ENCODE measurements at regions of chr9 and their contacts with region 1.

Region 1: DNA sequence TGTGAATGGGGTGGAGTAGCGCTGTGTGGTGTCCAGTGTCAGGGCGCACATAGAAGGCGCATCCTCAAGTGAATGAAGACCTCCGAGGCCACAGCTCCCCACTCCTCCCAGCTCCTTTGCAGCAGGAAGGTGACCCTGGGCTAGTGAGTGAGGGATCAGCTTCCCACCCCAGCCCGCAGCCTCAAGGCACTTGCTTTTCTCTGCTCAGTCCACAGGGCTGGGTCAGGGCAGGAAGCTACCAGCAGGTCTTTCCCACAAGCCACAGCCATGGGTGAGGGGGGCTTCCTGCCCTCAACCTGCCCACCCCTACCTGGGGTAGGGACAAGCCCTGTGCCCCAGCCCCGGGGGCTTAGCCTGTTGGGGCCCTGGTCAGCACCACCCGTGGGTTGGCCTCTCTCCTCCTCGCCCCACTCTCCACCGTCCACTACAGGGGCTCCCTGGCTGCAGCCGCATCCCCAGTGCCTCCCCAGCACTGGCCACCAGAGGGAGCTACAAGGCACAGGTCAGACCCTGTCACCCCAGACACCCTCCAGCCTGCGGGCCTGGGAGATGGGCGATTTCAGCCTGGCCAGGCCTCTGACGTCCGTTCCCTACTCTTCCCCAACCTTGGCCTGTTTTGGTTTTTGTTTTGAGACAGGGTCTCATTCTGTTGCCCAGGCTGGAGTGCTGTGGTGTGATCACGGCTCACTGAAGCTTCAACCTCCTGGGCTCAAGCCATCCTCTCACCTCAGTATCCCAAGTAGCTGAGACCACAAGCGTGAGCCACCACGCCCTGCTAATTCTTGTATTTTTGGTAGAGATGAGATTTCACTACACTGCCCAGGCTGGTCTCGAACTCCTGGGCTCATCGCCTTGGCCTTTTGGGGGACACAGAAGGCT is 1.3 kb upstream of the ABCA2 start:
- DNase-seq: peak; percentile 85 to 90
- H3K4me3 ChIP-seq: peak overlapping the region; percentile 75
- H3K4me3 Mint-ChIP-seq: peak overlapping the region; percentile 74
- H3K27ac Mint-ChIP-seq: peak overlapping the region; percentile 42
- H3K4me1 ChIP-seq: peaks cover 14% of the 10 kb centered on the region
- H3K4me1 Mint-ChIP-seq: no peaks in the 10 kb centered on the region
- H3K27me3 ChIP-seq: no peaks in the 10 kb centered on the region
- H3K27me3 Mint-ChIP-seq: no peaks in the 10 kb centered on the region
- CTCF ChIP-seq: peak; percentile 86 to 97

Region 2: GRCh38 chr9:136799854-136800657 is 229.2 kb before region 1 on chr9:
- CTCF ChIA-PET with region 1: interaction called, 13 read pairs
- POLR2A ChIA-PET with region 1: no interaction called
- intact Hi-C with region 1: no loop called
- DNase-seq: peak; percentile 90 to 96
- H3K4me3 ChIP-seq: peak overlapping the region; percentile 78
- H3K4me3 Mint-ChIP-seq: peak overlapping the region; percentile 79
- H3K27ac Mint-ChIP-seq: peak overlapping the region; percentile 70
- H3K4me1 ChIP-seq: peaks cover 37% of the 10 kb centered on the region
- H3K4me1 Mint-ChIP-seq: peaks cover 17% of the 10 kb centered on the region
- H3K27me3 ChIP-seq: no peaks in the 10 kb centered on the region
- H3K27me3 Mint-ChIP-seq: no peaks in the 10 kb centered on the region
- CTCF ChIP-seq: no peak

Region 3: DNA sequence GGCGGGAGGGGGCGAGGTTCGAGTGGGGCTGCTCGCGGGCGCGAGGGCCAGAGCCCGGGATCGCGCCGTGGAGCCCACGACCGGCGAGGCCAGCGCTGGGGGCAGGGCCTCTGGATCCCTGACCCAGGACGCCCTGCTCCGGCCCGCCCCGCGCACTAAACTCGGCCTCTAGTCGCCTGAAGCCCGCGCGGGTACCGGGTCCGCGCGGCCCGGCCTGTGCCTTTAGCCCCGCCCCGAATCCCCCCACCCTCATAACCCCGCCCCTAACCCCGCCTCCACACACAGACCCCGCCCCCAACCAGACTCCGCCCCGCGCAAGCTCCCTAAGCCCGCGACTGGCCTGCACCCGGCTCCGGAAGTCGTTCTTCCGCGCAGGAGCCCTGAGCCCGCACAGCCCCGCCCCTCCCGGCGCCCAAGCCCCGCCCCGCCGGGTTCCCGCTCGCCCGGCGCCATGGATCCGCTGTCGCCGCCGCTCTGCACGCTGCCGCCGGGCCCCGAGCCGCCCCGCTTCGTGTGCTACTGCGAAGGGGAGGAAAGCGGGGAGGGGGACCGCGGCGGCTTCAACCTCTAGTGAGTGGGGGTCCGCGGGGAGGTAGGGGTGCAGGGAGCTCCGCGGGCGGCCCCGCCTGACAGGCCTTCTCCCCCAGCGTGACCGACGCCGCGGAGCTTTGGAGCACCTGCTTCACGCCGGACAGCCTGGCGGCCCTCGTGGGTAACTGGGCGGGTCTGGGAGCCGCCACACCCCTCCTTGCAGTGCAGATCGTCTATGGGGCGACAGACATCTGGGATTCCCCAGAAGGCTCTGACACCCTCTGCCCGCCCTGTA is 37.1 kb before region 1 on chr9 and contains the start of gene PAXX:
- CTCF ChIA-PET with region 1: interaction called, 18 read pairs
- POLR2A ChIA-PET with region 1: interaction called, 3 read pairs
- intact Hi-C with region 1: no loop called
- DNase-seq: peak; percentile 93 to 96
- H3K4me3 ChIP-seq: peak within 1 kb of the TSS; percentile 87
- H3K4me3 Mint-ChIP-seq: peak within 1 kb of the TSS; percentile 83
- H3K27ac Mint-ChIP-seq: peak within 1 kb of the TSS; percentile 82
- H3K4me1 ChIP-seq: peaks cover 55% of the 10 kb centered on the region
- H3K4me1 Mint-ChIP-seq: peaks cover 30% of the 10 kb centered on the region
- H3K27me3 ChIP-seq: no peaks in the 10 kb centered on the region
- H3K27me3 Mint-ChIP-seq: no peaks in the 10 kb centered on the region
- CTCF ChIP-seq: no peak
- total RNA-seq, gene PAXX: 66.2 TPM in 2 replicates

Region 4: DNA sequence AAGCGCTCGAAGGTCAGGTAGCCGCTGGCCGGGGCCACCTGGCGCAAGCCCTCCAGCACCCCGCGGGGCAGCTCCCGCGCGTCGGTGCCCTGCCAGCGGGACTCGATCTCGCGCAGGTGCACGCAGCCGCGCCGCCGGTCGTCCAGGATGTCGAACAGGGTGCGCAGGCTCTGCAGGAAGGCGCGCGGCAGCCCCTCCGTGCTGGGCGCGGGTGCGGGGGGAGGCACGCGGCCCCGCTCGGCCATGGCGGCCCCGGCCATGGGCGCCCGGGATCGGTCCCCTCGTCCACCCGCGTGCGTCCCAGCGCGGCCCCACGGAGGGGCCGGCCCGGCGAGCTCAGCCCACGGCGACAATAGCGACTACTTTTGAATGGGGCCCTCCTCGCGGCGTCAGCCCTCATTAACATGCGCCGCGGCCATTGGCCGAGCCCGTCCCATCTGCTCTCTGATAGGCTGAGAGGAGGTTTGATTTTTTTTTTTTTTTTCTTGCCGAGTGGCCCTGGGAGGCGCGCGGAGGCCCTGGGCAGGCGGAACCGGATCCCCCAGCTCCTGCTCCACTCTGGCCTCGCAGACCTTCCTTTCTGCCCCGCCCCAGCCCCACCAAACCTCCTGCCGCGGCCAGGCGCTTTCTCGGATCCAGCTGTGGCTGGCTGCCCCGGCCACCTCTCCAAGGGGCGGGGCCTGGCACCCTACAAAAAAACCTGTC is 41.1 kb after region 1 on chr9 and contains the start of gene SAPCD2:
- CTCF ChIA-PET with region 1: interaction called, 42 read pairs
- POLR2A ChIA-PET with region 1: no interaction called
- intact Hi-C with region 1: no loop called
- DNase-seq: peak; percentile 95
- H3K4me3 ChIP-seq: peak within 1 kb of the TSS; percentile 80
- H3K4me3 Mint-ChIP-seq: peak within 1 kb of the TSS; percentile 68
- H3K27ac Mint-ChIP-seq: peak within 1 kb of the TSS; percentile 85
- H3K4me1 ChIP-seq: peaks cover 33% of the 10 kb centered on the region
- H3K4me1 Mint-ChIP-seq: peaks cover 18% of the 10 kb centered on the region
- H3K27me3 ChIP-seq: no peaks in the 10 kb centered on the region
- H3K27me3 Mint-ChIP-seq: no peaks in the 10 kb centered on the region
- CTCF ChIP-seq: no peak
- total RNA-seq, gene SAPCD2: 53.3 and 57.5 TPM in 2 replicates

Region 5: GRCh38 chr9:137129456-137130175 is 100.3 kb after region 1 on chr9:
- CTCF ChIA-PET with region 1: interaction called, 10 read pairs
- POLR2A ChIA-PET with region 1: no interaction called
- intact Hi-C with region 1: no loop called
- DNase-seq: peak; percentile 88 to 90
- H3K4me3 ChIP-seq: peak overlapping the region; percentile 87
- H3K4me3 Mint-ChIP-seq: peak overlapping the region; percentile 82
- H3K27ac Mint-ChIP-seq: peak overlapping the region; percentile 89
- H3K4me1 ChIP-seq: 0 out of 2 replicates have a peak, but pooled peaks cover 9% of the 10 kb centered on the region
- H3K4me1 Mint-ChIP-seq: peaks cover 21% of the 10 kb centered on the region
- H3K27me3 ChIP-seq: no peaks in the 10 kb centered on the region
- H3K27me3 Mint-ChIP-seq: no peaks in the 10 kb centered on the region
- CTCF ChIP-seq: no peak

Measured in Caco-2 (cell line).